ENCODE measurements at regions of chr6 and their contacts with region 1.

Region 1: DNA sequence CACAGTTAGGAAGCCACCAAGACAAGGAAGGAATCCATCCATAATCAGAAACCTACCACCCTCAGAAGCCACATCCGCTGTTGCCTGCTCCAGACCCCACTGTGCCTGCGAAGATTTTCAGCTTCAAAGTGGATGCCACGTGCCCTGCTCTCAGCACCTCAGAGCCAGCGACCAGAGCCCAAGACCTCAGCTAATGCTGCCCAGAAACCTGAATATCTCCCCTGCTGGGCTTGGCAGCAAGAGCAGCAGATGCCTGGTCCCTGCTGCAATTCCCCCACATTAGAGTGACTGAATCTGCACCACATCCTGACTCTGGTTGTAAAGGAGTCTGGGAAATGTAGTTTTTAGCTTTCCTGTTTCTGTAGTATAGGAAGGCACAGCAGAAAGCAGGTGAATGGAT is 10.7 kb upstream of the ULBP3 start:
- DNase-seq: peak in 20 of 35 experiments; percentile 6 to 59 (median 21)
- ATAC-seq: peak; percentile 65 to 81 (median 67)
- H3K4me3 ChIP-seq: no peak overlapping the region
- H3K4me3 Mint-ChIP-seq: peak overlapping the region; percentile 29 to 63 (median 59)
- H3K27ac ChIP-seq: no peak overlapping the region
- H3K27ac Mint-ChIP-seq: peak overlapping the region; percentile 24 to 74
- H3K4me1 ChIP-seq: peaks cover 7 to 20% of the 10 kb centered on the region in 2 experiments
- H3K4me1 Mint-ChIP-seq: peaks cover 25 to 28% (median 26%) of the 10 kb centered on the region in 3 donors
- H3K27me3 ChIP-seq: peaks cover 0 to 16% of the 10 kb centered on the region in 2 experiments
- H3K27me3 Mint-ChIP-seq: peaks cover 13 to 22% of the 10 kb centered on the region in 2 donors

Region 2: DNA sequence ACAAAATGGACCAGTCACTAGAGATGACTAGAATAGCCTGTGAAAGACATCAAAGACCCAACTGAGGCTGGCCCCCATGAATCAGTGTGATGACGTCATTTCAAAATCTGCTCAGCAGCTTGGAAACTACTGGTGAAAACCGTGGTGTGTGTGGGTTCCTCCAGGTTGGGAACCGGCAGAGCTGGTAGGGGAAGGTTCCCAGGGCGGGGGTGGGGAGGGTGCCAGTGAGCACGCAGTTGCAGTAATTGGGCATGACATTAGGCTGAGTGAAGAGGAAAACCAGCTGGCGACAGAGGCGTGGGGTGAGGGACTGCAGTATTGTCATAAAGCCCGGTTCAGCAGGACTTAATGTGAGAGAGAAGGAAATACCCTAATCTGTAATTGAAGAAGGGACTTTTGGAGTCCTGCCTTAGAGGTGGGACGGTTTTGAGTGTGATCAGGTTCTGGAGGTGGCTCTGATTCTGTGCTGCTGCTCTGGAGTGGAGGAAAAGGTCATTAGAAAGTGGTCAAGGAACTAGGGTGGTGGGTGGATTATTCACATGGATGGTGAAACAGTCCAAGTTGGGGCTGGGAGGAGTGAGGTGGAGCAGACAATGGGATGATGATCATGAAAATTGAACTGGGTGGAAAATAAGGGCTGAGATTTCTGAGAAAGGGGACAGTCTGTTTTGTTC is 733.9 kb after region 1 on chr6:
- CTCF ChIA-PET with region 1: interaction called, 8 to 17 read pairs
- POLR2A ChIA-PET with region 1: no interaction called
- DNase-seq: peak in 3 of 35 experiments; percentile 1 to 37 (median 3)
- ATAC-seq: peak in 1 of 4 experiments; percentile 20
- H3K4me3 ChIP-seq: no peak overlapping the region
- H3K4me3 Mint-ChIP-seq: no peak overlapping the region
- H3K27ac ChIP-seq: no peak overlapping the region
- H3K27ac Mint-ChIP-seq: peak overlapping the region in 1 of 2 donors; percentile 44
- H3K4me1 ChIP-seq: no peaks in the 10 kb centered on the region
- H3K4me1 Mint-ChIP-seq: peaks cover 4 to 13% (median 6%) of the 10 kb centered on the region in 3 donors
- H3K27me3 ChIP-seq: peaks cover 0 to 8% of the 10 kb centered on the region in 2 experiments
- H3K27me3 Mint-ChIP-seq: peaks cover 5 to 10% of the 10 kb centered on the region in 2 donors

Measured in T-cell (primary cell).